GM12878 (cell line): ENCODE measurements at regions of chr20 and their contacts with region 1.

Region 1: GRCh38 chr20:57346477-57346876 is 4.6 kb upstream of the RAE1 start:
- DNase-seq: no peak
- ATAC-seq: peak; percentile 72
- H3K4me3 ChIP-seq: no peak overlapping the region
- H3K27ac ChIP-seq: no peak overlapping the region
- H3K4me1 ChIP-seq: no peaks in the 10 kb centered on the region
- H3K27me3 ChIP-seq: no peaks in the 10 kb centered on the region
- CTCF ChIP-seq: peak; percentile 71 to 81 (median 77)
- EP300 ChIP-seq: no peak
- POLR2A ChIP-seq: no peak
- RAD21 ChIP-seq: peak; percentile 86

Region 2: DNA sequence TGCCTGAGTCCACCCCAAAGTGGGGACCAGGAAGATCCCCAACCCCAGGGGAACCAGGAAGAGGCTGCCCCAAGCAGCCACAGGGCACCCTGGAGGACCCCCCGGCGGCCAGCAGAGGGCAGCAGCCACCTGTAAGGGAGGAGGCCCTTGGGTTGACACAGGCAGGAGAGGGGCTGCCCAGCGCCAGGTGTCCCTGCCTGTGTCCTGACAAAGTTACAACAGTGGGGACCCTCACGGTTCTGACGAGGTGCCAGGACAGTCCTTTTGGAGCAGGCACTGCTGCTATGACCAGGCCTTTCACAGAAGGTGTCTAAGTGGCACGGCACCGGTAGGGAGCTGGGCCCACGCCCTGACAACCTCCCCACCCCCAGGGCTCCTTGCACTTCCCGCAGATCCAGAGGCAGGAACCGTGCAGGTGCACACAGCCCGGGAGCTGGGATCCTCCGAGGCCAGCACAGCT is 256.8 kb before region 1 on chr20:
- CTCF ChIA-PET with region 1: interaction called, 17 read pairs
- POLR2A ChIA-PET with region 1: no interaction called
- RAD21 ChIA-PET with region 1: interaction called, 8 read pairs
- SMC1A ChIA-PET with region 1: interaction called, 7 read pairs
- in situ Hi-C with region 1: loop called (anchors 5 kb)
- intact Hi-C with region 1: loop called (anchors 1 kb)
- DNase-seq: no peak
- ATAC-seq: peak; percentile 97
- H3K4me3 ChIP-seq: no peak overlapping the region
- H3K27ac ChIP-seq: no peak overlapping the region
- H3K4me1 ChIP-seq: no peaks in the 10 kb centered on the region
- H3K27me3 ChIP-seq: no peaks in the 10 kb centered on the region
- CTCF ChIP-seq: peak; percentile 77 to 95 (median 82)
- EP300 ChIP-seq: no peak
- POLR2A ChIP-seq: no peak
- RAD21 ChIP-seq: peak; percentile 78

Region 3: DNA sequence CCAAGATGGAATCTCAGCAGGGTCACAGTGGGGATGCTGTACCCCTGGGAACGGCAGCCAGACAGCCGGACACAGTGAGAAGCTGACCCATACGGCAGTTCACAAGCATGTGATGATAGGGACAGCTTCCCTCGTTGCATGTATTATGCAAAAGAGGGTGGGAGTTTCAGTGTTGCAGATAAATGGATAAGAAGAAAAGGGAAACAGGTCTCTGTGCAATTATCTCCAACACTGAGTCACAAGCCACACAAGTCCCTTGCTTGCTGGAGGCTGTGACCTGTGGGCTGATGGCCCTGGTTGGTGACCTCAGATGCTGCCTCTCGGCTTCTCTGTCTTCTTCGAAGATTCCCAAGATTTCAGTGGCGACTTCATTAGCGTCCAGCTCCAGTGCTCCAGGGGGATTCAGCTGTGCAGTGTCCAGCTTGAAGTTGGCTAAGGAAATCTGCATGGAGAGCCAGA is 37.6 kb before region 1 on chr20:
- CTCF ChIA-PET with region 1: no interaction called
- POLR2A ChIA-PET with region 1: no interaction called
- RAD21 ChIA-PET with region 1: no interaction called
- SMC1A ChIA-PET with region 1: no interaction called
- in situ Hi-C with region 1: no loop called
- intact Hi-C with region 1: no loop called
- DNase-seq: no peak
- ATAC-seq: no peak
- H3K4me3 ChIP-seq: no peak overlapping the region
- H3K27ac ChIP-seq: no peak overlapping the region
- H3K4me1 ChIP-seq: no peaks in the 10 kb centered on the region
- H3K27me3 ChIP-seq: peaks cover 2% of the 10 kb centered on the region in 2 experiments
- CTCF ChIP-seq: no peak
- EP300 ChIP-seq: no peak
- POLR2A ChIP-seq: no peak
- RAD21 ChIP-seq: no peak

Region 4: DNA sequence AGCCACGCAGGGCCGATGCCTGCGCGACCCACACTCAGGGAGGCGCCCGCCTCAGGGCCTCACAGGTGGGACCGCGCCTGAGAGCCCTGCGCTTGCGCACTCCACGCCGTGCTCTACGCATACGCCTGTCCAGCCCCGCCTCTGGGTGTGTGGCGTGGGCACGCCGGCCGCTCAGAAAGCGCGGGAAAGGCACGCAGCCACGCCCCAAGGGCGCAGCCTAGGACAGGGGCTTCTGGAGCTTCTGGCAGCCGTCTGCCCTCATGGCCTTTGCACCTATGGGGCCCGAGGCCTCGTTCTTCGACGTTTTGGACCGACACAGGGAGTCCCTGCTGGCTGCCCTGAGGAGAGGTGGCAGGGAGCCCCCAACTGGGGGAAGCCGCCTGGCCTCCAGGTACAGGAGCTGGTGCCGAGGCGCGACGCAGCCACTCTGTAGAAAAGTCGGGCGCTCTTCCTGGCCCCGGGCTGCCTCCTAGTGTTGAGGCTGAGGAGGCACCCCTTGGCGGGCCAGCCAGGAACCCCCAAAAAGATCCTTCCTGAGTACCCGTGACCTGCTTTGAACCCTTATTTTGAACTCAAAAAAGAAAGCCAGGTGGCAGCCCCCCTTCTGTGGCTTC is 16.8 kb before region 1 on chr20 and contains the start of gene SPO11:
- CTCF ChIA-PET with region 1: interaction called, 13 read pairs
- POLR2A ChIA-PET with region 1: no interaction called
- RAD21 ChIA-PET with region 1: interaction called, 5 read pairs
- SMC1A ChIA-PET with region 1: interaction called, 12 read pairs
- in situ Hi-C with region 1: no loop called
- intact Hi-C with region 1: no loop called
- DNase-seq: no peak
- ATAC-seq: peak; percentile 38; the same call in 2 of the 3 replicates
- H3K4me3 ChIP-seq: no peak within 1 kb of the TSS
- H3K27ac ChIP-seq: no peak within 1 kb of the TSS
- H3K4me1 ChIP-seq: no peaks in the 10 kb centered on the region
- H3K27me3 ChIP-seq: peaks cover 1 to 2% of the 10 kb centered on the region in 2 experiments; a peak in 2 of 4 replicates
- CTCF ChIP-seq: peak; percentile 20 to 34 (median 33); a peak in 4 of 6 replicates
- EP300 ChIP-seq: no peak
- POLR2A ChIP-seq: no peak
- RAD21 ChIP-seq: no peak
- polyA plus RNA-seq, gene SPO11: not detected

Region 5: GRCh38 chr20:57335392-57335791 is 11.1 kb before region 1 on chr20:
- CTCF ChIA-PET with region 1: interaction called, 13 read pairs
- POLR2A ChIA-PET with region 1: no interaction called
- RAD21 ChIA-PET with region 1: interaction called, 5 read pairs
- SMC1A ChIA-PET with region 1: interaction called, 12 read pairs
- in situ Hi-C with region 1: no loop called
- intact Hi-C with region 1: no loop called
- DNase-seq: no peak
- ATAC-seq: no peak
- H3K4me3 ChIP-seq: no peak overlapping the region
- H3K27ac ChIP-seq: no peak overlapping the region
- H3K4me1 ChIP-seq: no peaks in the 10 kb centered on the region
- H3K27me3 ChIP-seq: peaks cover 0 to 3% of the 10 kb centered on the region in 2 experiments; a peak in 1 of 4 replicates
- CTCF ChIP-seq: no peak; a peak in 1 of 6 replicates
- EP300 ChIP-seq: no peak
- POLR2A ChIP-seq: no peak
- RAD21 ChIP-seq: no peak

Region 6: GRCh38 chr20:57361212-57361915 is 14.9 kb after region 1 on chr20:
- CTCF ChIA-PET with region 1: interaction called, 12 read pairs
- POLR2A ChIA-PET with region 1: no interaction called
- RAD21 ChIA-PET with region 1: no interaction called
- SMC1A ChIA-PET with region 1: no interaction called
- in situ Hi-C with region 1: no loop called
- intact Hi-C with region 1: no loop called
- DNase-seq: no peak
- ATAC-seq: no peak
- H3K4me3 ChIP-seq: no peak overlapping the region
- H3K27ac ChIP-seq: no peak overlapping the region
- H3K4me1 ChIP-seq: no peaks in the 10 kb centered on the region
- H3K27me3 ChIP-seq: no peaks in the 10 kb centered on the region
- CTCF ChIP-seq: no peak
- EP300 ChIP-seq: no peak
- POLR2A ChIP-seq: no peak
- RAD21 ChIP-seq: no peak

Region 7: DNA sequence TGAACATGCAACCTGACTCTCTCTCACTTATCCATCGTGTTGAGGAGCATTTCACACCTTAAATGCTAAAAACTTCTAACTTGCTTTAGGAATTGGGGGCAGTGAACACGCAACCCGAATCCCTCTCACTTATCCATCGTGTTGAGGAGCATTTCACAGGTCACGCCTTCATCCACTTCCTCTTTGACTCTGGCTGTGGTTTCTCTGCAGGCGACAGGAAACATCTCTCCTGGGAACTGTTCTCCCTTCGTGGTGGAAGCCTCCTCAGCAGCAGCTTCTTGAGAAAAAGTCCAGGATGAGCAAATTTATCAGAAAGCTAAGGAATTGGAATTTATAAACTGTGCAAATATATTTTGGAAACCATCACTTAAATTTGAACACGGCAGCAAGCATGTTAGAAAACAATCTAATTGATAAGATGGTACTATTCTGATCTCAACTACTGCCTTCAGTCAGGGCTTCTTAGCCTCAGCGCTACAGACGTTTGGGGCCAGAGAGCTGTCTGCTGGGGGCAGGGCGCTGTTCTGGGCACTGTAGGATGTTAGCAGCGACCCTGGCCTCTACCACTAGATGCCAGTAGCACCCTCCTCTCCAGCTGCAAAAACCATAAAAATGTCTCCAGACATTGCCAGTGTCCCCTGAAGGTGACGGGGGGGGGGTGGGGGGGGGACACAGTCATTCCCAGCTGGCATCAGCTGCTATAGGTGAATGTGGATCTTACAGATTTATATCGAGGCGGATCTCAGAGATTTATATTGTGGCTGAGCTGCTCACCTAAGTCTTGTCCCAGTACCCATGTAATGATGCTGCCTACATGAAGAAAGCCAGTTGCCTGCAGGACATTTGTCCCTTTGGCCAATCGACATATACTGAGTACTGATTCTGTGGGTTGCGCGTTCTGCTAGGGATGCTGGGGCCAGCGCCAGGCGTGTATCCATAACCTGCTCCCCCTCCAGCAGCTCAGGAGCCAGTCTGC is 152.2 kb after region 1 on chr20:
- CTCF ChIA-PET with region 1: interaction called, 12 read pairs
- POLR2A ChIA-PET with region 1: no interaction called
- RAD21 ChIA-PET with region 1: no interaction called
- SMC1A ChIA-PET with region 1: interaction called, 4 read pairs
- in situ Hi-C with region 1: no loop called
- intact Hi-C with region 1: no loop called
- DNase-seq: no peak
- ATAC-seq: peak; percentile 93
- H3K4me3 ChIP-seq: no peak overlapping the region
- H3K27ac ChIP-seq: no peak overlapping the region
- H3K4me1 ChIP-seq: peaks cover 21% of the 10 kb centered on the region
- H3K27me3 ChIP-seq: peaks cover 0 to 2% of the 10 kb centered on the region in 2 experiments; a peak in 1 of 4 replicates
- CTCF ChIP-seq: peak; percentile 54 to 74 (median 70)
- EP300 ChIP-seq: no peak
- POLR2A ChIP-seq: no peak
- RAD21 ChIP-seq: peak; percentile 60